ENCODE measurements at regions of chr3 and their contacts with region 1.

Region 1: DNA sequence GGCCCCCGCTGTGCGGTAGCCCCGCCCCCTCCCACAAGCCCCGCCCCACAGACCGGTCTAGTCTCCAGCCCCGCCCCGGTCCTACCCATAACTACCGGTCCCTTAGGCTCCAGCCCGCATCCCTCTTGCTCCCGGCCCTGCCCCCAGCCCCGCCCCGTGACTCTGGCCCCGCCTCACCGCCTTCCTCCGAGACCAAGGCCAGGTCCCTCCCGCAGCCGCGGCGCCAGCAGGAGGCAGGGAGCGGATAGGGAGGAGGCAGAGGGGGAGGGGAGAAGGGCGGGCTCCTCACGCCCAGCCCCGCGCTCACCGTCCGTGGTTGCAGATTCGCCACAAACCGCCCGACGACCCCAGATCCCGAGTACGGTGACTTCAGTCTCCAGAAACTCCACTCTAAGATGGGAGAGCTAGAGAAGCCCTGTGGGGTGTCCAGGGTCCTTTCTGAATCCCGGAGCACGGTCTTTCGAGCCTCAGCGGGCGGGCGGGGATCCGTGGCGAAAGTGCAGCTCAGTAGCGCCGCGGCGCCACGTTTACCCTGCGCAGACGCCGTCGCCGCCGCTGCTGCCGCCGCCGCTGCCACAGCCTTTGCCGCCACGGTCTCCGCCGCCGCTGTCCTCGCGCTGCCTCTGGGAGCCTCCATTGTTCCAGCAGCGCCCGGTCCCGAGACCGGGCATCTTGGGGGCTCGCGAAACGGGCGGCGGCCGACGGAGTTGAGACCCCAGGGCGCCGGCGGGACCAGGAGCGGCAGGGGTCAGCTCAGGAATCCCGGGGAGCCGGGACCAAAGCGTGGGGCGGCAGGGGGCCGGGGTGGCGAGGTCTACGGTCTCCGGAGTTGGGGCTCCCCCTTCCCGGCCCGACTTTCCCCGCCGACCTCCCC is at the start of gene BRPF1:
- DNase-seq: peak; percentile 98
- ATAC-seq: peak; percentile 96
- H3K4me3 ChIP-seq: peak within 1 kb of the TSS; percentile 95
- H3K27ac ChIP-seq: peak within 1 kb of the TSS; percentile 98
- H3K4me1 ChIP-seq: peaks cover 19 to 40% of the 10 kb centered on the region in 2 experiments; a peak in 3 of 4 replicates
- H3K27me3 ChIP-seq: no peaks in the 10 kb centered on the region
- CTCF ChIP-seq: 0 out of 6 replicates have a peak, but pooled peaks of 1 of the 3 experiments have one; percentile 3
- POLR2A ChIP-seq: peak; percentile 53
- RAD21 ChIP-seq: no peak
- total RNA-seq, gene BRPF1: 23.6 TPM

Region 2: GRCh38 chr3:9352917-9353752 is 378.3 kb before region 1 on chr3:
- CTCF ChIA-PET with region 1: interaction called, 3 read pairs
- POLR2A ChIA-PET with region 1: no interaction called
- RAD21 ChIA-PET with region 1: no interaction called
- intact Hi-C with region 1: loop called (anchors 10 kb)
- DNase-seq: peak; percentile 21
- ATAC-seq: peak; percentile 88
- H3K4me3 ChIP-seq: no peak overlapping the region
- H3K27ac ChIP-seq: no peak overlapping the region
- H3K4me1 ChIP-seq: peaks cover 17 to 29% of the 10 kb centered on the region in 2 experiments; a peak in 3 of 4 replicates
- H3K27me3 ChIP-seq: no peaks in the 10 kb centered on the region
- CTCF ChIP-seq: peak; percentile 68 to 95 (median 86); a peak in 5 of 6 replicates
- POLR2A ChIP-seq: no peak
- RAD21 ChIP-seq: peak; percentile 93

Region 3: GRCh38 chr3:9503283-9503682 is 228.2 kb before region 1 on chr3:
- CTCF ChIA-PET with region 1: interaction called, 4 read pairs
- POLR2A ChIA-PET with region 1: no interaction called
- RAD21 ChIA-PET with region 1: no interaction called
- intact Hi-C with region 1: loop called (anchors 5 kb)
- DNase-seq: peak; percentile 71
- ATAC-seq: peak; percentile 67
- H3K4me3 ChIP-seq: no peak overlapping the region
- H3K27ac ChIP-seq: no peak overlapping the region
- H3K4me1 ChIP-seq: peaks cover 15 to 27% of the 10 kb centered on the region in 2 experiments
- H3K27me3 ChIP-seq: no peaks in the 10 kb centered on the region
- CTCF ChIP-seq: peak; percentile 77 to 96 (median 93)
- POLR2A ChIP-seq: no peak
- RAD21 ChIP-seq: peak; percentile 93

Region 4: GRCh38 chr3:9715764-9716437 is 15.5 kb before region 1 on chr3:
- CTCF ChIA-PET with region 1: interaction called, 13 read pairs
- POLR2A ChIA-PET with region 1: interaction called, 5 read pairs
- RAD21 ChIA-PET with region 1: interaction called in 1 of 2 experiments, 4 read pairs
- intact Hi-C with region 1: no loop called
- DNase-seq: peak; percentile 81
- ATAC-seq: peak; percentile 98
- H3K4me3 ChIP-seq: no peak overlapping the region
- H3K27ac ChIP-seq: peak overlapping the region; percentile 9; the same call in 1 of the 2 replicates
- H3K4me1 ChIP-seq: peaks cover 10 to 14% of the 10 kb centered on the region in 2 experiments
- H3K27me3 ChIP-seq: peaks cover 3% of the 10 kb centered on the region; the same call in 1 of the 2 replicates
- CTCF ChIP-seq: peak; percentile 89 to 94 (median 94)
- POLR2A ChIP-seq: no peak
- RAD21 ChIP-seq: peak; percentile 99

Region 5: DNA sequence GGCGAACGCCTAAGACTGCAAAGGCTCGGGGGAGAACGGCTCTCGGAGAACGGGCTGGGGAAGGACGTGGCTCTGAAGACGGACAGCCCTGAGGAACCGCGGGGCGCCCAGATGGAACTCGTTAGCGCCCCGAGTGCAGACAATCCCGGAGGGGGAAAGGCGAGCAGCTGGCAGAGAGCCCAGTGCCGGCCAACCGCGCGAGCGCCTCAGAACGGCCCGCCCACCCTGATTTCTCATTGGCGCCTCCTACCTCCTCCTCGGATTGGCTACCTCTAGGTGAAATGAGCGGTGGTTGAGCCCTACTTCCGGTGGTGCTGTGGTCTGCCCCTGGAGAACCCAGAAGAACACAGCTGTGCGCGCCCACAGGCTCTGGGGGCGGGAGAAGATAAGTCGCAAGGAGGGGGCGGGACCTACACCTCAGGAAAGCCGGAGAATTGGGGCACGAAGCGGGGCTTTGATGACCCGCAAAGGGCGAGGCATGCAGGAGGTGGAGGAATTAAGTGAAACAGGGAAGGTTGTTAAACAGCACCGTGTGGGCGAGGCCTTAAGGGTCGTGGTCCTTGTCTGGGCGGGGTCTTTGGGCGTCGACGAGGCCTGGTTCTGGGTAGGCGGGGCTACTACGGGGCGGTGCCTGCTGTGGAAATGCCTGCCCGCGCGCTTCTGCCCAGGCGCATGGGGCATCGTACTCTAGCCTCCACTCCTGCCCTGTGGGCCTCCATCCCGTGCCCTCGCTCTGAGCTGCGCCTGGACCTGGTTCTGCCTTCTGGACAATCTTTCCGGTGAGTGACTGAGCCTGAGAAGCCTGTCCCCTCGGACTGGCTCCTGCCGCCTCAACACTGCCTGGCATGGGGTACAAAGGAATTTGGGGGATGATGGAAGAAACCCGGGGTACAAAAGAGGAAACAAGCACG is 18.5 kb after region 1 on chr3 and contains the start of gene OGG1:
- CTCF ChIA-PET with region 1: no interaction called
- POLR2A ChIA-PET with region 1: interaction called, 9 read pairs
- RAD21 ChIA-PET with region 1: no interaction called
- intact Hi-C with region 1: loop called (anchors 1 kb)
- DNase-seq: peak; percentile 96
- ATAC-seq: peak; percentile 95
- H3K4me3 ChIP-seq: peak within 1 kb of the TSS; percentile 73 to 82
- H3K27ac ChIP-seq: peak within 1 kb of the TSS; percentile 74
- H3K4me1 ChIP-seq: peaks cover 8 to 18% of the 10 kb centered on the region in 2 experiments
- H3K27me3 ChIP-seq: no peaks in the 10 kb centered on the region
- CTCF ChIP-seq: no peak
- POLR2A ChIP-seq: peak; percentile 45
- RAD21 ChIP-seq: no peak
- total RNA-seq, gene OGG1: 16.3 TPM

Region 6: DNA sequence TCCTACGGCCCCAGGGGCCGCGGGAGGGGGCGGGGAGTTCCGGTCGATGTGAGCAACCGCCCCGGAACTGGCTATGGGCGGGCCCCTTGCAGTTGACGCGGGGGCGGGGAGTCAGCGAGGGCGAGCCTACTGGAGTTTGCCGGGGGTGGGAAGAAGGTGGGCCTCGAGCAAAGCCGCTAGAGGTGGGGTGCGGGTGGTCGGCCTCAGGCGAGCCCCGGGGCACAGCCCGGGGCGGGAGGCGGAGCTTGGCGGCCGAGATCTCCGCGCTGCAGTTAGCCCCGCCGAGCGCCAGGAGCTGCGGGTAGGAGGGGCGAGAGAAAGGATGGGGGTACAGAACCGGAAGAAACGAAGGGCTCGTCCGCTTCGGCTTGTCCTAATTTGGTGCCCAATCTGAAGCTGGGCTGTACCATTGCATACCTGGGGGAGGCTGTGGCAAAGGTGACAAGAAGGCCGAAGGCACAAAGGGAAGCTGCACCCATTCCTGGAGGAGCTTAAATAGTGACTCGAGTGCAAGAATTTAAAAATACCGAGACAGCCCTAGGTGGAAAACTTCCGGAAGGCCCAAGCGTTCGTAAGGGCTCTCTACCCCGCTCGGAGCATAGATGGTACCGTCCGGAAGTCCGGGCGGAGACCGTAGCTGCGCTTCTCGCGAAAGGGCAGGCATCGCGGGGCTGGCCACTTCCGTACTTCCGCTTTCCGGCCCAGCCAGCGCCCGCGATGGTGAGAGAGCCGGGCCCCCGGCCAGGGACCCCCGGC is 61.1 kb after region 1 on chr3 and contains the starts of genes ARPC4 and TADA3:
- CTCF ChIA-PET with region 1: no interaction called
- POLR2A ChIA-PET with region 1: no interaction called
- RAD21 ChIA-PET with region 1: no interaction called
- intact Hi-C with region 1: loop called (anchors 2 kb)
- DNase-seq: peak; percentile 94
- ATAC-seq: peak; percentile 88
- H3K4me3 ChIP-seq: peak within 1 kb of the TSS; percentile 81 to 87
- H3K27ac ChIP-seq: peak within 1 kb of the TSS; percentile 82
- H3K4me1 ChIP-seq: peaks cover 0 to 18% of the 10 kb centered on the region in 2 experiments; a peak in 3 of 4 replicates
- H3K27me3 ChIP-seq: no peaks in the 10 kb centered on the region
- CTCF ChIP-seq: 0 out of 6 replicates have a peak, but pooled peaks of 1 of the 3 experiments have one; percentile 1
- POLR2A ChIP-seq: no peak
- RAD21 ChIP-seq: no peak
- total RNA-seq, gene ARPC4: 110 TPM
- total RNA-seq, gene TADA3: 72.0 TPM

Measured in HCT116 (cell line).